G401 (cell line): ENCODE measurements at regions of chr11 and their contacts with region 1.

Region 1: GRCh38 chr11:64846998-64847666 is 2.7 kb upstream of the CDC42BPG start:
- DNase-seq: peak; percentile 97

Region 2: DNA sequence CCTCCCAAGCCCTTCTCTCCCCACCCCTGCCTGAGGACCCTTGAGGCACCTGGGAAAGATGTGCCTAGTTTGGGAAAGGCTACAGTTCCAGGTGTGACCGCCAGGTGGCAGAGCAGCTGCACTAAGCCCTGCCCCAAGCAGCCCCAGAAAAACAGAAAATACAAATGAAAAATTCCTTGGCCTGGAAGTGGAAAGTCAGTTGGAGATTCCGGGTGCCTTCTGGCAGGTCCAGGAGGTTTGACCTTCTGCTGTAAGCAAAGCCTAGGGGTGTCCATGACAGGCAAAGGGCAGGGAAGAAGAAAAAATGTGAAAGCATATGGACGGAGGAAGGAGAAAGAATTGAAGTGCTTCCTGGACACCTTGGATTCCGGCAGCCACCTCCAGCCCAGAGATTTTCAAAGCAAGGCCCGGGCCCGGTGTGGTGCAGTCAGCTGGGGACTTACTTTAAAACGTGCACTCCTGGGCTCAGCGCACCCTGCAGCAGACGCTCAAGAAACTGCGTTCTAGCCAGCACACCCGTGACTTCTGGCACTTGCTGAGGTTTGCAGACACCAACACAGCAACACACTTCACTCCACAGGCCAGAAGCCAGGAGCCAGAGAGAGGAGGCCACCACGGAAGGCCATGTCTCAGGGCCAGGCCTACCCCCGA is 293.5 kb before region 1 on chr11:
- in situ Hi-C with region 1: no loop called
- DNase-seq: peak; percentile 95

Region 3: GRCh38 chr11:64878494-64879243 is 31.5 kb after region 1 on chr11 and contains the start of gene EHD1:
- in situ Hi-C with region 1: no loop called
- DNase-seq: peak; percentile 99
- total RNA-seq, gene EHD1: 25.3 and 32.4 TPM in 2 replicates

Region 4: DNA sequence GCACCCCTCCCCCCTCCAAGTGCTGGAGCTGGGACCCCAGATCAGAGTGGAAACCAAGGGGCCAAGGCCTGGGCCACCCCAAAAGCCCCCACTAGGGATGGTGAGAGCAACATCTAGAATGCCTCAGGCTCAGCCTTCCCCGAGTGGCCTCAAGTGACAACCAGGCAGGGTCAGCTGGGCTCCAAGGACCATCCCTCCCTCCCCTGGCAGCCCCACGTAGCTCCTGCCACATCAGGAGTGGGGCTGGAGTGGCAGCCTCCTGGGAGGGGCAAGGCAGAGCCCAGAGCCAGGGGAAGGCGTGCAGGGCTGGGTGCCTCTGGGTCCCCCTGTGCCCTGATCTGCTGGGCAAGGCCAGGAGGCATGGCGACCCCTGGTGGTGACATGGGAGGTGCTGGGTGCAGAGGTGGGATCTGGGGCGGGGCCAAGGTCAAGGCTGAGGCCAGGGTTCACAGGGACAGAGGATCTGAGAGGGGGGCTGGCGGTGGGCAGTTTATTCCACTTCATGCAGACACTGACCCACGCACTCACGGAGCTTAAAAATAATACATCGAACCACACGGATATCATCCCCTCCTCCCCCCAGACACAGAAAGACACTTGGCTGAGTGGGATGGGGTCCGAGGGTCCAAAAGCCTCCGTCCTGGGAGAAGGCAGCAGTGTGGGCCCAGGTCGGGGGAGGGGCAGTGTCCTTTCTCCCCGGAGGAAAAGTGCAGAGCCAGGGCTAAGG is 47.1 kb after region 1 on chr11:
- in situ Hi-C with region 1: loop called (anchors 5 kb)
- DNase-seq: peak; percentile 70

Region 5: GRCh38 chr11:64924102-64924851 is 77.1 kb after region 1 on chr11 and contains the start of gene PPP2R5B:
- in situ Hi-C with region 1: no loop called
- DNase-seq: peak; percentile 99
- total RNA-seq, gene PPP2R5B: 11.7 and 20.5 TPM in 2 replicates